Dendritic cell treated with granulocyte-macrophage colony-stimulating factor and Interleukin-4, amounts not matched to agents 40 ng/mL and 50 ng/mL, for 4 days (primary cell): ENCODE measurements at regions of chr14 and their contacts with region 1.

Region 1: GRCh38 chr14:24366721-24367513 is 1.1 kb upstream of the NFATC4 start:
- H3K4me3 Mint-ChIP-seq: peak overlapping the region; percentile 63
- H3K27ac Mint-ChIP-seq: peak overlapping the region; percentile 40
- H3K4me1 Mint-ChIP-seq: peaks cover 42% of the 10 kb centered on the region
- H3K27me3 Mint-ChIP-seq: peaks cover 57% of the 10 kb centered on the region

Region 2: GRCh38 chr14:24411443-24412389 is 44.8 kb after region 1 on chr14:
- intact Hi-C with region 1: loop called (anchors 5 kb)
- H3K4me3 Mint-ChIP-seq: no peak overlapping the region
- H3K27ac Mint-ChIP-seq: no peak overlapping the region
- H3K4me1 Mint-ChIP-seq: no peaks in the 10 kb centered on the region
- H3K27me3 Mint-ChIP-seq: peaks cover 1% of the 10 kb centered on the region

Region 3: GRCh38 chr14:24431569-24432258 is 64.8 kb after region 1 on chr14:
- intact Hi-C with region 1: loop called (anchors 2 kb)
- H3K4me3 Mint-ChIP-seq: peak overlapping the region; percentile 82
- H3K27ac Mint-ChIP-seq: peak overlapping the region; percentile 97
- H3K4me1 Mint-ChIP-seq: peaks cover 71% of the 10 kb centered on the region
- H3K27me3 Mint-ChIP-seq: peaks cover 7% of the 10 kb centered on the region